Activated B cell treated with CpG ODN at 0.5 μM for 24 hours (primary cell): ENCODE measurements at regions of chr1 and their contacts with region 1.

Region 1: DNA sequence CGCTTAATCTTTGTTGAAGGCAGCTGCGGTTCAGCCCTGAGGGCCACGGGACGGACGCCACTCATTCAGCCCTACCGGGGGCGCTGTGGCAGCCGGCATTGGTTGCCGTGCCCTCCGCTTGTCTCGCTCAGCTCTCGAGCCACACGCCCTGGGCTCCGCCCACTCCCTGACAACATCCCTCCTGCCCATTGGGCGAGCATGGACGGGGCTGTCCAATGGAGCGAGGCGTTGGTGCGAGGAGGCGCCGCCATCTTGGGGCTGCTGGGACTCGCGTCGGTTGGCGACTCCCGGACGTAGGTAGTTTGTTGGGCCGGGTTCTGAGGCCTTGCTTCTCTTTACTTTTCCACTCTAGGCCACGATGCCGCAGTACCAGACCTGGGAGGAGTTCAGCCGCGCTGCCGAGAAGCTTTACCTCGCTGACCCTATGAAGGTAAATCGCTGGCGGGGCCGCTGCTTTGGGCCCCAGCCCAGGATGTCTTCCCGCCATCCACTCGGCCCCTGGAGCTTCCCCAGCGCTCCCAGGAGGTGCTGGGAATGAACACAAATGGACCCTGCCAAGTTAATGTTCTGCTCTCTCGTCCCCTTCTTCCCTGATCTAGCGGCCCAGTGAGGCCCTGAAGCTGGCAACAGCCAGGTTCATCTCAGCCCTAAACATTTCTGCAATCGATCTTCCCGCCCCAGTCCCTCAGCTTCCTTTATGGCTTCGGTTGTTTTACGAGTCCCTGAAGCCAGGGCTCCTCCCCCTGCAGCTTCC is at the start of gene SRP9:
- DNase-seq: peak; percentile 94
- ATAC-seq: peak; percentile 97
- H3K4me3 Mint-ChIP-seq: no peak within 1 kb of the TSS
- H3K27ac Mint-ChIP-seq: no peak within 1 kb of the TSS
- H3K4me1 Mint-ChIP-seq: peaks cover 37% of the 10 kb centered on the region
- H3K27me3 Mint-ChIP-seq: no peaks in the 10 kb centered on the region
- CTCF ChIP-seq: no peak
- total RNA-seq, gene SRP9: 141 and 143 TPM in 2 replicates

Region 2: DNA sequence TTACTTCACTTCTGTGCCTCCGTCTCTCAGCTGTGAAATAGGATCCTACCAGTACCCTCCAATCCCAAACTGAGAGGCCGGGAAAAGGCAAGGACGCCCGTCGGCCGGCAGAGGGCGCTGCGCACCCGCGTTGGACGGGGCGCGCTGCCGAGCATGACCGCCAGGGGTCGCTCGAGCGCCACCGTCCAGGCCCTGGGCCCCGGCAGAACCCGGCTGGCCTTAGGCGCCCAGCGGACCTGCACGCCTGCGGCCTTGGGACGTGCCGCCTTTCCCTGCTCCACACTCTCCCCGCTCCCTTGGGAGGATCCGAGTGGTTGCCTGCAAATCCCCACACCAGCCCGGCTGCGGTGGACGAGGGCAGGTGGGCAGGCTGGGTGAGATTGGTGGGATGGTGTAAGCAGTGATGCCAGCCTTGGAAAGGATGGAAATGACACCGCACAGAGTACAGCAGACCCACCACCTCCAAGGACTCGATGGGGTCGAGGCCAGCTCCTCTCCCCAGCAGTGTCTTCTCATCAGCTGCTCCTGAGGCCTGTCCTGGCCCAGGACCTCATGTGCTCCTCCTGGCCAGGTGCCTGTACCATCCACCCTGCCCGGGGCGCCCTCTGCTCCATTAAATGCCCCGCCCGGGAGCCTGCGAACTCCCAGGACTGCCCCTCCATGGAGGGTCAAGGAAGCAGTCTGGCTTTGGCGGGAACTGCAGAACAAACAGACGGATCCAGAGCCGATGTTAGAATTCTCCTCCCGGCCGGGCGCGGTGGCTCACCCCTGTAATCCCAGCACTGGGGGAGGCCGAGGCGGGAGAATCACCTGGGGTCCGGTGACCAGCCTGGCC is 302.6 kb before region 1 on chr1:
- CTCF ChIA-PET with region 1: interaction called, 15 read pairs
- POLR2A ChIA-PET with region 1: no interaction called
- intact Hi-C with region 1: loop called (anchors 1 kb)
- DNase-seq: peak; percentile 84
- ATAC-seq: peak; percentile 83
- H3K4me3 Mint-ChIP-seq: no peak overlapping the region
- H3K27ac Mint-ChIP-seq: no peak overlapping the region
- H3K4me1 Mint-ChIP-seq: peaks cover 40% of the 10 kb centered on the region
- H3K27me3 Mint-ChIP-seq: no peaks in the 10 kb centered on the region
- CTCF ChIP-seq: peak; percentile 100

Region 3: GRCh38 chr1:225627304-225627947 is 150.3 kb before region 1 on chr1:
- CTCF ChIA-PET with region 1: no interaction called
- POLR2A ChIA-PET with region 1: no interaction called
- intact Hi-C with region 1: no loop called
- DNase-seq: no peak
- ATAC-seq: no peak
- H3K4me3 Mint-ChIP-seq: no peak overlapping the region
- H3K27ac Mint-ChIP-seq: no peak overlapping the region
- H3K4me1 Mint-ChIP-seq: no peaks in the 10 kb centered on the region
- H3K27me3 Mint-ChIP-seq: peaks cover 6% of the 10 kb centered on the region
- CTCF ChIP-seq: no peak

Region 4: GRCh38 chr1:225809842-225810578 is 32.2 kb after region 1 on chr1 and contains the start of gene EPHX1:
- CTCF ChIA-PET with region 1: interaction called, 6 read pairs
- POLR2A ChIA-PET with region 1: interaction called, 7 read pairs
- intact Hi-C with region 1: loop called (anchors 2 kb)
- DNase-seq: peak; percentile 57
- ATAC-seq: peak; percentile 87
- H3K4me3 Mint-ChIP-seq: peak within 1 kb of the TSS; percentile 86
- H3K27ac Mint-ChIP-seq: no peak within 1 kb of the TSS
- H3K4me1 Mint-ChIP-seq: peaks cover 12% of the 10 kb centered on the region
- H3K27me3 Mint-ChIP-seq: peaks cover 3% of the 10 kb centered on the region
- CTCF ChIP-seq: no peak
- total RNA-seq, gene EPHX1: 0.93 and 1.2 TPM in 2 replicates

Region 5: DNA sequence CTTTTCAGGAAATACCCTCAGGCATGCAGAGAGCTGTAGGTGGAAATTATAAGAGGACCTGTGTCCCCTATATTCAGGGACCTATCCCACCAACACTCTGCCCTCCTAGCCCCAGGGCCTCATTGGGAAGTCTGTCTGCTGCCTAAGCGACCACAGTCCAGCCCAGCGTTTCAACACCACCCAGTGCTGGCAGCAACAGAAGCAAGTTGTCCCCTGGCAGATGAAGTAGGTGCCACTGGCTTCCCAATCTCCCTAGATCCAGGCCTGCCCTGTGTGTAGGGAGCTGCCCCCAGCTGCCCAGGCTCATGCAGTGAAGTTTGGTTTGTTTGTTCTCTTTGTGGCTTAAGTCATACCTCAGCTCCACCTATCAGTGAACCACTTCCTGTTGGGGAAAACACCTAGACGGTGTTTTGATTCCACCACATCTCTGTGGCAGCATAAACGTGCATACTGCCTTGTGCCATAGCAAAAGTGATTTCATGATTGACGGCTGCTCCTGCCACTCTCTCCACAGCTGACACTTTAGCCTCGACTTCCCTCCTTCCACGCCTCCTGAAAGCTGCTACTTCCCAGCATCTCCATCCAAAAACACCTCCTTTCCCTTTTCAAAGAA is 119.3 kb after region 1 on chr1:
- CTCF ChIA-PET with region 1: interaction called, 4 read pairs
- POLR2A ChIA-PET with region 1: interaction called, 16 read pairs
- intact Hi-C with region 1: loop called (anchors 1 kb)
- DNase-seq: peak; percentile 34
- ATAC-seq: peak; percentile 99
- H3K4me3 Mint-ChIP-seq: peak overlapping the region; percentile 48
- H3K27ac Mint-ChIP-seq: peak overlapping the region; percentile 95
- H3K4me1 Mint-ChIP-seq: peaks cover 37% of the 10 kb centered on the region
- H3K27me3 Mint-ChIP-seq: no peaks in the 10 kb centered on the region
- CTCF ChIP-seq: no peak

Region 6: GRCh38 chr1:225977937-225978748 is 200.4 kb after region 1 on chr1:
- CTCF ChIA-PET with region 1: interaction called, 8 read pairs
- POLR2A ChIA-PET with region 1: interaction called, 4 read pairs
- intact Hi-C with region 1: loop called (anchors 1 kb)
- DNase-seq: no peak
- ATAC-seq: peak; percentile 79
- H3K4me3 Mint-ChIP-seq: peak overlapping the region; percentile 63
- H3K27ac Mint-ChIP-seq: peak overlapping the region; percentile 81
- H3K4me1 Mint-ChIP-seq: peaks cover 33% of the 10 kb centered on the region
- H3K27me3 Mint-ChIP-seq: no peaks in the 10 kb centered on the region
- CTCF ChIP-seq: no peak